GM10248 (cell line): ENCODE measurements at regions of chr2 and their contacts with region 1.

Region 1: GRCh38 chr2:20562540-20563225 is 88.2 kb downstream of the HS1BP3 start:
- DNase-seq: no peak
- CTCF ChIP-seq: peak; percentile 4

Region 2: DNA sequence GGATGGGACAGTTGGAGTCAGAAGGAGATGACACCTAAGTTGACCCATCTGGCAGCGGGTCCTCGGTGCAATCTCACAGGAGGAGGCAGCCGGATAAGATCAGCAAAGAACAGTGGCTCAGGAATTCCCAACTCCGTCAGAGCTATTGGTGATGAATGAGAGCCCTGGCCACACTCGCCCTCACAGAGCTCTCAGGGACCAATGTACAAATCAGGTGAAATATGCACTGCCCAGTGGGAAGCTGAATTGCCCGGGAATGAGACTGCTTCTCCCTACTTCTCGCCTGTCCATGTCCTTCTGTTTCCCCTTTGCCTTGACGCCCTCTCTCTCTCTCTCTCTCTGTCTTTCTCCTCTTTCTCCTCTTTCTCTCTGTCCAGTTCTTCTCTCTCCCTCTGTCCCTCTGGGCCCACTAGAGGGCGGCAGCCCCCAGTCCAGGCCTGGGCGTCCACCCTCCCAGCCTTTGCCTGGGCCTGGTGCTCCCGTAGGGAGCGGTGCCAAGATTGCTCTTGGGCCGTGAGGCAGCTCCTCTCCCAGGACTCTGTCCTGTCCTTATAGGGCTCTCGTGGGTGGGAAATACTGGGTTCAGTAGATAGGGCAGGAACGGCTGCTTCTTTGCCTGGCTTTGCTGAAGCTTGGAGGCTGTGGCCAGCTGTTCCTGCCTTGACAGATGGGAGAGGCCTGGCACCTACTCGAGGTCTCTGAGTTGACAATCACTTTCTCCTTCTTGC is 183.7 kb before region 1 on chr2:
- CTCF ChIA-PET with region 1: no interaction called
- POLR2A ChIA-PET with region 1: no interaction called
- DNase-seq: no peak
- CTCF ChIP-seq: peak; percentile 44

Region 3: DNA sequence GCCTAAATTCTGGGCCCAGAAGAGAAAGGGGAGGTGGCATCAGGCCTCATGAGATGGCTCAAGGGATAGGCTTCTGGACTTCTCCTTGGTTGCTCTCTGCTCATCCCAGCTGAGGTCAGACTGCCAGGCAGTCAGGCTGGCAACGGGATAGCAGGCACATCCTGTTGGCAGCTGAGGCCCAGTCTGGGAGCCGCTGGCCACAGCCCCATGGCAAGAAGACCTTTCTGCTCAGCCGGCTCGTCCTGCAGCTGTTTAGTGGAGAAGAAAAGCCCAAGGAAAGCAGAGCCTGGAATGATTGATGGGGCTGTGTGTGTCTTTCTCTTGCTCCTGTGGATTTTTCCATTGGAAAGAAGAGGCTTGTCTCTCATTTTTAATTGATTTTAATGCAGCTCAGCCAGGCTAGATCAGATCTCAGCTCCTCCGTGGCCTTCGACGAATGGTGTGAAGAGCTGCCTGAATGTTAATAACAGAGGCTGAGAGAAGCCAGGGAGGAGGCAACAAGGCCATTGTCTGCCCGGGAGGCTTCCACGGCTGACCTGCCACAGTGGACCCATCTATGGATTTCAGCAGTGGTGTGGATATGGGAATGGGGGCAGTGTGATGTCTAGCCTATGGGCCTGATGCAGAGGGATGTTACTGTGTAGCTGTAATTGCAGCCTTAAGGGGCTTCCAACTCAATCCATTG is 11.3 kb before region 1 on chr2:
- CTCF ChIA-PET with region 1: no interaction called
- POLR2A ChIA-PET with region 1: no interaction called
- DNase-seq: no peak
- CTCF ChIP-seq: no peak

Region 4: DNA sequence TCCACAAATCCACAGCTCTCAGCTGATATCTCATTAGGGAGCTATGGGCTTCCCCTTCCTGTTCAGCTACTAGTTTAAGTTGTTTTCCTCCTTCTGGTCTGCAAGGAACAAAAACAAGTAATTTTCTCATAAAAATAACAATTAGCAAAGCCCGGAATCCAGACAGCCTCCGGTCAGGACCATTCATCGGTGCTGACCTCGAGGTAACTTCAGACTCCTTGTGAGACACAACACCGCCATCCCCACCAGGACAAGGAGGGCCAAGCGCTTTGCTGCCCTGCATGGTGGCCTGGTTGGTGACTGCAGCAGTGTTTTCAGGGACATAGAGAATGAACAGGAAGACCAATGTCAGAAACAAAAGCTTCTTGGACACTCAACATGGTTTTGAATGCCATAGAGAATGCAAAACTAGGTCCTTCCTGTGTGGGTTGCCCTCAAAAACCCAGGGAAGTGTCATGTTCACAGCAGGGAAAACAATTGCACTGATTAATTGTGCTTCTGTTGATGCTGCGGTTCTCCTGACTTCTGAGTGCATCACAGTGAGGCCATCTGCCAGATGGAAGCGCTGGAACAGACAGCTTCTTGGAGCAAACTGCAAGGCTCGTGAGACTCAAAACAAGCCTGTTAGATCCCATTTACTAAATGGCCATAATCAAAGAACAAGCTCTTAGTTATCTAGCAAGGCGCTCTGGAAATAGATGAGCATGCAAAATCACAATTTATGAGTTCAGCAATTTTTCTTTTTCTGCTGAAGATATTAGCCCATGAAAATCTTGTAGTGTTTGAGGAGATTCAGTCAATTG is 11.1 kb after region 1 on chr2:
- CTCF ChIA-PET with region 1: interaction called, 10 read pairs
- POLR2A ChIA-PET with region 1: no interaction called
- DNase-seq: no peak
- CTCF ChIP-seq: no peak